Activated CD8-positive, alpha-beta memory T cell treated with anti-CD3 and anti-CD28 coated beads, Interleukin-2, amount 10 ng/mL, durations not matched to agents 7 days and 5 days (primary cell): ENCODE measurements at regions of chr1 and their contacts with region 1.

Region 1: GRCh38 chr1:35726450-35727433 is 8.1 kb upstream of the C1orf216 start:
- DNase-seq: peak; percentile 55
- ATAC-seq: peak; percentile 90
- H3K4me3 Mint-ChIP-seq: no peak overlapping the region
- H3K27ac Mint-ChIP-seq: peak overlapping the region; percentile 35
- H3K4me1 Mint-ChIP-seq: no peaks in the 10 kb centered on the region
- H3K27me3 Mint-ChIP-seq: no peaks in the 10 kb centered on the region

Region 2: GRCh38 chr1:35519432-35519831 is 207.3 kb before region 1 on chr1:
- CTCF ChIA-PET with region 1: no interaction called
- DNase-seq: no peak
- ATAC-seq: no peak
- H3K4me3 Mint-ChIP-seq: no peak overlapping the region
- H3K27ac Mint-ChIP-seq: no peak overlapping the region
- H3K4me1 Mint-ChIP-seq: no peaks in the 10 kb centered on the region
- H3K27me3 Mint-ChIP-seq: no peaks in the 10 kb centered on the region

Region 3: DNA sequence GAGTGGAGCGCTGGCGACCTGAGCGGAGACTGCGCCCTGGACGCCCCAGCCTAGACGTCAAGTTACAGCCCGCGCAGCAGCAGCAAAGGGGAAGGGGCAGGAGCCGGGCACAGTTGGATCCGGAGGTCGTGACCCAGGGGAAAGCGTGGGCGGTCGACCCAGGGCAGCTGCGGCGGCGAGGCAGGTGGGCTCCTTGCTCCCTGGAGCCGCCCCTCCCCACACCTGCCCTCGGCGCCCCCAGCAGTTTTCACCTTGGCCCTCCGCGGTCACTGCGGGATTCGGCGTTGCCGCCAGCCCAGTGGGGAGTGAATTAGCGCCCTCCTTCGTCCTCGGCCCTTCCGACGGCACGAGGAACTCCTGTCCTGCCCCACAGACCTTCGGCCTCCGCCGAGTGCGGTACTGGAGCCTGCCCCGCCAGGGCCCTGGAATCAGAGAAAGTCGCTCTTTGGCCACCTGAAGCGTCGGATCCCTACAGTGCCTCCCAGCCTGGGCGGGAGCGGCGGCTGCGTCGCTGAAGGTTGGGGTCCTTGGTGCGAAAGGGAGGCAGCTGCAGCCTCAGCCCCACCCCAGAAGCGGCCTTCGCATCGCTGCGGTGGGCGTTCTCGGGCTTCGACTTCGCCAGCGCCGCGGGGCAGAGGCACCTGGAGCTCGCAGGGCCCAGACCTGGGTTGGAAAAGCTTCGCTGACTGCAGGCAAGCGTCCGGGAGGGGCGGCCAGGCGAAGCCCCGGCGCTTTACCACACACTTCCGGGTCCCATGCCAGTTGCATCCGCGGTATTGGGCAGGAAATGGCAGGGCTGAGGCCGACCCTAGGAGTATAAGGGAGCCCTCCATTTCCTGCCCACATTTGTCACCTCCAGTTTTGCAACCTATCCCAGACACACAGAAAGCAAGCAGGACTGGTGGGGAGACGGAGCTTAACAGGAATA is 149.4 kb before region 1 on chr1:
- CTCF ChIA-PET with region 1: interaction called, 20 read pairs
- DNase-seq: peak; percentile 91
- ATAC-seq: peak; percentile 91
- H3K4me3 Mint-ChIP-seq: peak overlapping the region; percentile 77
- H3K27ac Mint-ChIP-seq: peak overlapping the region; percentile 86
- H3K4me1 Mint-ChIP-seq: peaks cover 30% of the 10 kb centered on the region
- H3K27me3 Mint-ChIP-seq: peaks cover 29% of the 10 kb centered on the region

Region 4: GRCh38 chr1:35592991-35593694 is 133.6 kb before region 1 on chr1:
- CTCF ChIA-PET with region 1: no interaction called
- DNase-seq: peak; percentile 37
- ATAC-seq: peak; percentile 34
- H3K4me3 Mint-ChIP-seq: no peak overlapping the region
- H3K27ac Mint-ChIP-seq: no peak overlapping the region
- H3K4me1 Mint-ChIP-seq: peaks cover 12% of the 10 kb centered on the region
- H3K27me3 Mint-ChIP-seq: no peaks in the 10 kb centered on the region

Region 5: DNA sequence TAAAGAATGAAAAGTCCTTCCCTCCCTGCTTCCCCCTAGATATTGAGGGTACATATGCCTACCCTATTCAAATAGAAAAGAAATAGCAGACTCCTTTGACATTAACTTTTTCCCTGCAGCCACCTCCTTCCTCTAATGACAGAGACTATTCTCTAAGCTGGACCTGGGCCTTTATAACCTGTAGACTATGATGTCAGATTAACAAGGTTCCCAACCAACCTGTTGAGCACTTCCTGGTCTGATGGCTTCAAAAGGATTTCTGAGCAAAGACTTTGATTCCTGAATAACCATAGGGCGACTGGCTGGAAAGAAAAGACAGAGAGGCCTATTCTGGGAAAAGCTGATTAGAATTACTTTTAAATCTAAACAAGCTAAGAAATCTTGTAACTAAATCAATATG is 10.4 kb after region 1 on chr1:
- CTCF ChIA-PET with region 1: interaction called, 30 read pairs
- DNase-seq: no peak
- ATAC-seq: no peak
- H3K4me3 Mint-ChIP-seq: no peak overlapping the region
- H3K27ac Mint-ChIP-seq: peak overlapping the region; percentile 6
- H3K4me1 Mint-ChIP-seq: peaks cover 2% of the 10 kb centered on the region
- H3K27me3 Mint-ChIP-seq: no peaks in the 10 kb centered on the region

Region 6: DNA sequence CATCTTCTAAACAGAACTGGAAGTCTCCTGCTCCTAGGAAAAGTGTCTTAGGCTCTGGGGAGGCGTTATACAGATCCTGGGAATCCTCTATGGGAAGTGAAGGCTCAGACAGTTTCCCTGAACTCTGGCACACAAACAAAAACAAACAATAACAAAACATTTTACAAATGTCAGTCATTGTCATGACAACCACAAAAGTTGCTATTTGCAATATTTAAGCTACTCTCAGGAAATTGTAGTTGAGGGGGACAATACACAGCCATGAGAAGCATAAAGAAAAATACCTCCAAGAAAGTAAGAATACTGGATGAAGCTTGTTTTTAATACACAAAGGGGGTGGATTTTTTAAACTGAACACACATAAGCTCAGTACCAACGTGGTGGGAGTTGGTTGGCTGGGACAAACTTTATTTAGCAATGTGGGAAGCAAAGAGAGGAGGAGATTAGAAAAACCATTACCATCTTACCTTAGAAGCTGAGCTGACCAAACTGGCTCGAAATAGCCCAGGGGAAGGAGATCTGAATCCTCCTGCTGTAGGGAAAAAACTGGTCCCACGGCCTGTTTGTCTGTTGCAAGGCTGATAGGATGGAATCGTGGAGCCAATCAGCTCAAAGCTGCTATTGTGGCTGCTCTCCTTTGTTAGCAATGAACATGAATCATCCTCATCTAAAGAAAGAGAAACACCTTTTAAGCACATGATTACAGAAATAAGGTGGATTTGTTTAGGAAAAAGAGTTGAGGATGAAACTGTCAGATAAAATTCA is 21.4 kb after region 1 on chr1:
- CTCF ChIA-PET with region 1: interaction called, 18 read pairs
- DNase-seq: no peak
- ATAC-seq: no peak
- H3K4me3 Mint-ChIP-seq: no peak overlapping the region
- H3K27ac Mint-ChIP-seq: no peak overlapping the region
- H3K4me1 Mint-ChIP-seq: peaks cover under 1% of the 10 kb centered on the region
- H3K27me3 Mint-ChIP-seq: no peaks in the 10 kb centered on the region

Region 7: DNA sequence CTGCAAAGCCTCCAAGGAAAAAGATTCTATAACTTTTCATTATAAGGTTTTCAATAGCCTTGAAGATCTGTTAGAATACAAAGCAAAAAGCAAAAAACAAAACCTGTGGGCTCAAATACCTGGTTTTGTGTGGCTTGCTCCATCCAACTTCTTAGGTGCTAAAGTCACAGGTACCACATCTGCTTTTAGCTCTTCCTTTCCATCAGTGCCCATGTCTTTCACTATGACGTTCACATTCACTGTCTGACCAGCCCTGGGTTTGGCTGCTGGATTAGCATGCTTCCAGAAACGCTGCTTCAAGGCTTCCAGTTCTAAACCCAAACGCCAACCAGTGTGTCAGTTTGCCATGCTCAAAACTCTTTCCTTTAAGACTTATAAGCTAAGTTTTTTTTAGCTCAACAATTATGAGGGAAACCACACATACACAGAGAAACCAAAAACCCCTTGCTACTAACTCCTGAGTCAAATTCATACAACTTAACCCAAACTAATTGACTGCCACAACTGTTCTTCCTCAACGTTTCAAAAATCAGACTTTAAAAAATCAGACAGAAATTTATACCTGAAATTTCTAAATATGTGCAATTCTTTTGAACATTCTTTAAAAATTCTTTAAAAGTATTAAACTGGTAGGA is 27.0 kb after region 1 on chr1:
- CTCF ChIA-PET with region 1: interaction called, 12 read pairs
- DNase-seq: no peak
- ATAC-seq: peak; percentile 39
- H3K4me3 Mint-ChIP-seq: no peak overlapping the region
- H3K27ac Mint-ChIP-seq: peak overlapping the region; percentile 66
- H3K4me1 Mint-ChIP-seq: peaks cover 22% of the 10 kb centered on the region
- H3K27me3 Mint-ChIP-seq: no peaks in the 10 kb centered on the region

Region 8: GRCh38 chr1:35769188-35769758 is 42.5 kb after region 1 on chr1:
- CTCF ChIA-PET with region 1: interaction called, 13 read pairs
- DNase-seq: peak; percentile 94
- ATAC-seq: peak; percentile 87
- H3K4me3 Mint-ChIP-seq: peak overlapping the region; percentile 96
- H3K27ac Mint-ChIP-seq: peak overlapping the region; percentile 79
- H3K4me1 Mint-ChIP-seq: peaks cover 31% of the 10 kb centered on the region
- H3K27me3 Mint-ChIP-seq: no peaks in the 10 kb centered on the region

Region 9: GRCh38 chr1:35790670-35791069 is 63.9 kb after region 1 on chr1:
- CTCF ChIA-PET with region 1: no interaction called
- DNase-seq: no peak
- ATAC-seq: no peak
- H3K4me3 Mint-ChIP-seq: no peak overlapping the region
- H3K27ac Mint-ChIP-seq: no peak overlapping the region
- H3K4me1 Mint-ChIP-seq: no peaks in the 10 kb centered on the region
- H3K27me3 Mint-ChIP-seq: no peaks in the 10 kb centered on the region

Region 10: GRCh38 chr1:35931446-35932157 is 204.9 kb after region 1 on chr1:
- CTCF ChIA-PET with region 1: no interaction called
- DNase-seq: no peak
- ATAC-seq: peak; percentile 38
- H3K4me3 Mint-ChIP-seq: peak overlapping the region; percentile 95
- H3K27ac Mint-ChIP-seq: peak overlapping the region; percentile 95
- H3K4me1 Mint-ChIP-seq: peaks cover 34% of the 10 kb centered on the region
- H3K27me3 Mint-ChIP-seq: no peaks in the 10 kb centered on the region